CD4-positive, alpha-beta memory T cell (primary cell): ENCODE measurements at regions of chr2 and their contacts with region 1.

Region 1: GRCh38 chr2:201231781-201232466 is 28.4 kb upstream of the CASP8 start:
- DNase-seq: peak; percentile 90 to 94 (median 91)
- H3K4me3 ChIP-seq: peak overlapping the region in 1 of 2 donors; percentile 36
- H3K4me3 Mint-ChIP-seq: peak overlapping the region; percentile 62 to 98 (median 96)
- H3K27ac ChIP-seq: peak overlapping the region; percentile 84
- H3K27ac Mint-ChIP-seq: peak overlapping the region; percentile 79 to 96 (median 90)
- H3K4me1 ChIP-seq: peaks cover 47% of the 10 kb centered on the region
- H3K4me1 Mint-ChIP-seq: peaks cover 32 to 63% (median 42%) of the 10 kb centered on the region in 4 donors
- H3K27me3 ChIP-seq: no peaks in the 10 kb centered on the region
- H3K27me3 Mint-ChIP-seq: no peaks in the 10 kb centered on the region

Region 2: DNA sequence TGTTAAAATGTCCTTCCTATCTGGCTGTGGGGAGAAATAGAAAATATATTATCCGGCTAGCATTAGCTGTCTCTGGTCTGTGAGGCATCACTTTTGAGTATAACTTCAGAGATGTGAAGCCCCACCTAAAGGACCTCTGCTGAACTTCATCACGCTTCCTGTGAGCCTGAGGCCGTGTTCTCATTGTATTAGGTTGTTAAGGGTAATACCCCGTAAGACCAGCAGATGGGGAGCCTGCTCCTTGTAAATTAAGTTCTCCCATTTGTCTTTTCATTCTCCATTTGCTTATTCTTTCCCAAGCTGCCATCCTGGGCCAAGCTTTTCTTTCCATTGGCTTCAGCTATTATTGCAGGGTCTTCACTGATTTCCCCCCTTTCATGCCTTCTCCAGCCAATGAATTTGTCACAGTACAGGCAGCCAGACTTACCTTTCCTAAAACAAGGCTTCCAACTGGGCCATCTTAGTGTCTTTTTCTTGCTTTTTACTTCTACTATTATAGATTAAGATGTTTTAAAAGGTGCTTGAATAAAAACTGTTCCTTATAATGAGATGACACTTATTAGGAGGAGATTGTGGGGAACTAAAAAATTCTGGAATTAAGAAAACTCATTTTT is 330.4 kb before region 1 on chr2:
- CTCF ChIA-PET with region 1: interaction called, 29 read pairs
- POLR2A ChIA-PET with region 1: interaction called, 5 read pairs
- intact Hi-C with region 1: loop called (anchors 1 kb)
- DNase-seq: peak; percentile 76 to 83 (median 79)
- H3K4me3 ChIP-seq: no peak overlapping the region
- H3K4me3 Mint-ChIP-seq: no peak overlapping the region
- H3K27ac ChIP-seq: peak overlapping the region; percentile 1
- H3K27ac Mint-ChIP-seq: peak overlapping the region; percentile 10 to 81 (median 65)
- H3K4me1 ChIP-seq: no peaks in the 10 kb centered on the region
- H3K4me1 Mint-ChIP-seq: peaks cover 6 to 7% (median 6%) of the 10 kb centered on the region in 4 donors
- H3K27me3 ChIP-seq: no peaks in the 10 kb centered on the region
- H3K27me3 Mint-ChIP-seq: no peaks in the 10 kb centered on the region

Region 3: DNA sequence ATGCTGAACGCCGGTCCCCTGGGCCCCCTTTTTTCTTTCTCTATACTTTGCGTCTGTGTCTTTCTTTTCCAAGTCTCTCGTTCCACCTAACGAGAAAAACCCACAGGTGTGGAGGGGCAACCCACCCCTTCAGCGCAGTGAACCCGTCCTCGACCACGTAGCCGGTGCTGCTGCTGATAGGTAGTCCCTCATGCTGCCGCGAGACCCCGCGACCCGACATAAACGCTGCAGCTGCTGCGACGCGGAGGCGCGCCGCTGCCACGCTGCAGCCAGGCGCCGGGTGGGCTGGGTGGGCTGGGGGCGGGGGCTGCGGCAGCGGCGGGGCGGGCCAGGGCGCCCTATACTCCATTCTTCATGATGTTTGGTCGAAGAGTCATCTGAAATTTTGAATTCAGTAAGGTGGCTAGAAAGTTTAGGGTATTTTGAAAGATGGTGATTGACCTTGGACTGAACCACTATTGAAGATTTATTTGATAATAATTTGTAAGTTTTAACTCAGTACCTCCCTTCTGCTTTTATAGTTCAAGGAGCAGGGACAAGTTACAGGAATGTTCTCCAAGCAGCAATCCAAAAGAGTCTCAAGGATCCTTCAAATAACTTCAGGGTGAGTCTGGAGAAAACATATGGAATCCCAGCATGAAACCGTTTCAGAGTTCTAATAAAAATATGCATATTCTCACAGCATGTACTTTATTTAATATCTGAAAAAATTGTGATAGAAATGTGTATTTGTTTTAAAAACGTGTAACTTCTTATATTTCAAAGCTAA is 91.9 kb before region 1 on chr2:
- CTCF ChIA-PET with region 1: interaction called, 11 read pairs
- POLR2A ChIA-PET with region 1: no interaction called
- intact Hi-C with region 1: no loop called
- DNase-seq: no peak
- H3K4me3 ChIP-seq: no peak overlapping the region
- H3K4me3 Mint-ChIP-seq: no peak overlapping the region
- H3K27ac ChIP-seq: no peak overlapping the region
- H3K27ac Mint-ChIP-seq: peak overlapping the region in 6 of 7 donors; percentile 27 to 79 (median 68)
- H3K4me1 ChIP-seq: peaks cover 13% of the 10 kb centered on the region
- H3K4me1 Mint-ChIP-seq: peaks cover 20 to 38% (median 29%) of the 10 kb centered on the region in 4 donors
- H3K27me3 ChIP-seq: no peaks in the 10 kb centered on the region
- H3K27me3 Mint-ChIP-seq: no peaks in the 10 kb centered on the region

Region 4: DNA sequence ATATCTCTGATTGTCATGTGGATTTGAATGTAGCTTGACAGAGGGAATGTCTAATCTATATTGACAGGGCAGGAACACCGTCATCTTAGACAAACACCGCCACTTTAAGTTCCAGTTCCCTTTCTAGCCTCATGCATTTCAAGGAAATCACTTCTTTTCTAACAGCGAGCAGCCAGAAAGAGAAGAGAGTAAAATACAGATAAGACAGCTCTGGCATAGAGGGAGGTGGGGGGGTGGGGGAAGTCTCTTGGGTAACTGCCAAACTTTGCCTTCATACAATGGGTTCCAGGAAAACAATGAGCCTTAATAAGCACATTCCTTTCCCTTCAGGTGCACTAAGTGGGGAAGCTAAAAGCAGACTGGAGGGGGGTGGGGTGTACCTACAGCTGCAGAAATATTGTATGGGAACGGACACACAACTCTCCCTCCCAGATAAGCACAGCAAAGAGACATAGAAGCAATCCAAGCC is 11.8 kb before region 1 on chr2:
- CTCF ChIA-PET with region 1: interaction called, 70 read pairs
- POLR2A ChIA-PET with region 1: interaction called, 5 read pairs
- intact Hi-C with region 1: no loop called
- DNase-seq: no peak
- H3K4me3 ChIP-seq: no peak overlapping the region
- H3K4me3 Mint-ChIP-seq: peak overlapping the region in 2 of 8 donors; percentile 22 to 29
- H3K27ac ChIP-seq: no peak overlapping the region
- H3K27ac Mint-ChIP-seq: peak overlapping the region; percentile 68 to 90 (median 82)
- H3K4me1 ChIP-seq: peaks cover 24% of the 10 kb centered on the region
- H3K4me1 Mint-ChIP-seq: peaks cover 23 to 63% (median 39%) of the 10 kb centered on the region in 4 donors
- H3K27me3 ChIP-seq: no peaks in the 10 kb centered on the region
- H3K27me3 Mint-ChIP-seq: no peaks in the 10 kb centered on the region

Region 5: DNA sequence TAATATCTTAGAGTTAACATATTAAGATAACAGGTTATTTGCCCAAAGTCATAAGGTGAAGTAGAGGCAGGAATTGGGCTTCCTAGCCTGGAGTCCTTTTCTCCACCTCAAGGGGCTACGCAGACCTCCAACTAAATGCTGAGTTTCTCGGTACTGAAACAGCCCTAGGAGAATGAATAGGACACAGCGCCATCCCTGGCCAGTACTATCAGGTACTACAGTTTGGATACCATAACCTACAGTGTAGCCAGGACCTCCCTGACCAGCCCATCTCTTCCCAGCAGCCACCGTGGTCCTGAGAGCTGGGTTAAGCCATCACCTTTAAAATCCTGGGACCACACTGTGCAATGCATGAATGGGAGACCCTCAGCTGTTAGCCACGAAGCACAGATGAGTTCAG is 44.1 kb after region 1 on chr2:
- CTCF ChIA-PET with region 1: interaction called, 16 read pairs
- POLR2A ChIA-PET with region 1: interaction called, 10 read pairs
- intact Hi-C with region 1: loop called (anchors 2 kb)
- DNase-seq: no peak
- H3K4me3 ChIP-seq: no peak overlapping the region
- H3K4me3 Mint-ChIP-seq: no peak overlapping the region
- H3K27ac ChIP-seq: no peak overlapping the region
- H3K27ac Mint-ChIP-seq: peak overlapping the region in 5 of 7 donors; percentile 28 to 84 (median 63)
- H3K4me1 ChIP-seq: peaks cover 34% of the 10 kb centered on the region
- H3K4me1 Mint-ChIP-seq: peaks cover 36 to 65% (median 46%) of the 10 kb centered on the region in 4 donors
- H3K27me3 ChIP-seq: no peaks in the 10 kb centered on the region
- H3K27me3 Mint-ChIP-seq: no peaks in the 10 kb centered on the region

Region 6: GRCh38 chr2:201780674-201781581 is 549.0 kb after region 1 on chr2 and contains the start of gene ALS2:
- CTCF ChIA-PET with region 1: interaction called, 11 read pairs
- POLR2A ChIA-PET with region 1: no interaction called
- intact Hi-C with region 1: loop called (anchors 2 kb)
- DNase-seq: peak; percentile 94 to 97 (median 96)
- H3K4me3 ChIP-seq: peak within 1 kb of the TSS; percentile 89 to 95
- H3K4me3 Mint-ChIP-seq: peak within 1 kb of the TSS; percentile 93 to 99 (median 97)
- H3K27ac ChIP-seq: peak within 1 kb of the TSS; percentile 76
- H3K27ac Mint-ChIP-seq: peak within 1 kb of the TSS; percentile 85 to 100 (median 99)
- H3K4me1 ChIP-seq: peaks cover 15% of the 10 kb centered on the region
- H3K4me1 Mint-ChIP-seq: peaks cover 11 to 22% (median 15%) of the 10 kb centered on the region in 4 donors
- H3K27me3 ChIP-seq: no peaks in the 10 kb centered on the region
- H3K27me3 Mint-ChIP-seq: peaks cover 1 to 4% of the 10 kb centered on the region in 2 donors
- total RNA-seq, gene ALS2: 9.8 to 10.5 TPM